ENCODE measurements at regions of chr4 and their contacts with region 1.

Region 1: DNA sequence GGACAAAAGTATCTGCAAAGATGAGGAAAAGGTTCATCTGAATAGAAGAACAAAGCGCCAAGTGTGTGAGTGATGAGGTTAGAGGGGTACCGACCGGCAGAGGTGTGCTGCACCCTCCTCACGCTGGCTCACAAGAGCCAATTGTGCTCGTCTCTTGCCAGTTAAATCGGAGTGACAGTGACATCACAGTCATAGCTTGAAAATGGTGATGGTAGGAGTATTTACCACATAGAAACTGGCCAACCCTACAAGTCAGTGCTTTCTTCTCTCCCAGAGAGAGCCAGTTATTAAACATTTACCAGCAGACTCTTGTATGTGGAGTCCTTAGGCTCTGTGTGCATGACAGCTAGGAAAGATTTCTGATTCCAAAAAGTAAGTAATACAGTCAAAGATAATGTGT is 32.4 kb downstream of the CLDN22 start:
- DNase-seq: no peak
- H3K4me3 ChIP-seq: no peak overlapping the region
- H3K27ac ChIP-seq: no peak overlapping the region
- H3K4me1 ChIP-seq: peaks cover 9% of the 10 kb centered on the region
- H3K27me3 ChIP-seq: no peaks in the 10 kb centered on the region
- CTCF ChIP-seq: no peak
- POLR2A ChIP-seq: no peak

Region 2: GRCh38 chr4:183300070-183300469 is 12.4 kb after region 1 on chr4:
- CTCF ChIA-PET with region 1: interaction called, 4 read pairs
- POLR2A ChIA-PET with region 1: no interaction called
- dilution Hi-C with region 1: no loop called
- intact Hi-C with region 1: loop called (anchors 1 kb)
- DNase-seq: peak; percentile 36
- H3K4me3 ChIP-seq: no peak overlapping the region
- H3K27ac ChIP-seq: peak overlapping the region; percentile 42
- H3K4me1 ChIP-seq: peaks cover 19% of the 10 kb centered on the region
- H3K27me3 ChIP-seq: no peaks in the 10 kb centered on the region
- CTCF ChIP-seq: no peak
- POLR2A ChIP-seq: no peak

Region 3: GRCh38 chr4:183398227-183399125 is 110.8 kb after region 1 on chr4:
- CTCF ChIA-PET with region 1: interaction called, 3 read pairs
- POLR2A ChIA-PET with region 1: no interaction called
- dilution Hi-C with region 1: no loop called
- intact Hi-C with region 1: loop called (anchors 5 kb)
- DNase-seq: peak; percentile 79
- H3K4me3 ChIP-seq: peak overlapping the region; percentile 8 to 43 (median 36)
- H3K27ac ChIP-seq: no peak overlapping the region
- H3K4me1 ChIP-seq: peaks cover 6% of the 10 kb centered on the region
- H3K27me3 ChIP-seq: no peaks in the 10 kb centered on the region
- CTCF ChIP-seq: peak; percentile 52 to 84
- POLR2A ChIP-seq: peak; percentile 33

Region 4: GRCh38 chr4:183458005-183458404 is 170.3 kb after region 1 on chr4:
- CTCF ChIA-PET with region 1: no interaction called
- POLR2A ChIA-PET with region 1: no interaction called
- dilution Hi-C with region 1: no loop called
- intact Hi-C with region 1: no loop called
- DNase-seq: no peak
- H3K4me3 ChIP-seq: no peak overlapping the region
- H3K27ac ChIP-seq: no peak overlapping the region
- H3K4me1 ChIP-seq: no peaks in the 10 kb centered on the region
- H3K27me3 ChIP-seq: no peaks in the 10 kb centered on the region
- CTCF ChIP-seq: no peak
- POLR2A ChIP-seq: no peak

Region 5: GRCh38 chr4:183504064-183504929 is 216.6 kb after region 1 on chr4:
- CTCF ChIA-PET with region 1: no interaction called
- POLR2A ChIA-PET with region 1: no interaction called
- dilution Hi-C with region 1: no loop called
- intact Hi-C with region 1: no loop called
- DNase-seq: peak; percentile 98
- H3K4me3 ChIP-seq: peak overlapping the region; percentile 75 to 92 (median 76)
- H3K27ac ChIP-seq: peak overlapping the region; percentile 86
- H3K4me1 ChIP-seq: peaks cover 18% of the 10 kb centered on the region
- H3K27me3 ChIP-seq: no peaks in the 10 kb centered on the region
- CTCF ChIP-seq: peak; percentile 1 to 4
- POLR2A ChIP-seq: peak; percentile 58

Region 6: GRCh38 chr4:183932576-183932975 is 644.9 kb after region 1 on chr4:
- CTCF ChIA-PET with region 1: no interaction called
- POLR2A ChIA-PET with region 1: no interaction called
- dilution Hi-C with region 1: no loop called
- intact Hi-C with region 1: no loop called
- DNase-seq: no peak
- H3K4me3 ChIP-seq: no peak overlapping the region
- H3K27ac ChIP-seq: no peak overlapping the region
- H3K4me1 ChIP-seq: no peaks in the 10 kb centered on the region
- H3K27me3 ChIP-seq: no peaks in the 10 kb centered on the region
- CTCF ChIP-seq: no peak
- POLR2A ChIP-seq: no peak

Measured in endothelial cell of umbilical vein (primary cell).